ENCODE measurements at regions of chr19 and their contacts with region 1.

Region 1: GRCh38 chr19:12913851-12914690 is 5.0 kb downstream of the SYCE2 start:
- DNase-seq: peak; percentile 79
- H3K4me3 Mint-ChIP-seq: peak overlapping the region; percentile 45
- H3K27ac Mint-ChIP-seq: peak overlapping the region; percentile 88
- H3K4me1 Mint-ChIP-seq: peaks cover 31% of the 10 kb centered on the region
- H3K27me3 Mint-ChIP-seq: no peaks in the 10 kb centered on the region

Region 2: DNA sequence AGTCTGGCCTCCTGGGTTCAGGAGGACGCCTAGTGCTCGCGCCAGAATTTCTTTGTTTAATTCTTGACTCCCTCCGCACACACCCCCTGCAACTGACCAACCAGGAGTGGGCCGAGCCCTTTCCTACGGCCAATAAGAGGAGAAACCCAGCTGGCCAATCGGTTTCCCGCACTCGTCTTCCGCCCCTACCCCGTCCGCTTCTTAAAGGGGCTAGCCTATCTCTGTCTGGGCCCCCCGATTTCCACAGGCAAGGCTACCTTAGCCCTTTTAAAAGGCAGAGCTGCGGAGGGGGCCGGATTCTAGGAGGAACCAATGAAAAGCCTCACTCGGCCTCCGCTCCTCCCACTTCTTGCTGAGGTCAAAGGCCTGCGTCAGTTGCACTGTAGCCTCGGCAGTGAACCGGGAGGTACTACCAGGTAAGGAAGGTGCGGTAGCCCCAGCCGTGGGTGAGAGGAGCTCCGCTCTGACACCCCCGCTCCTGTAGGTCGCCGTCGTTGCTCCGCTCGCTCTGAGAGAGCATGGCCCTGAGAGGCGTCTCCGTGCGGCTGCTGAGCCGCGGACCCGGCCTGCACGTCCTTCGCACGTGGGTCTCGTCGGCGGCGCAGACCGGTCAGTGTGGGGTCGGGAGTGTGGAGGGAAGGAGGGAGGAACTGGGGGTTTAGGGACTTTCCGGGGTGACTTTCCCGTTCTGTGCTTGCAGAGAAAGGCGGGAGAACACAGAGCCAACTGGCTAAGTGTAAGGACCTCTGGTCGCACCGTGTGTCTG is 23.1 kb before region 1 on chr19 and contains the start of gene GCDH:
- CTCF ChIA-PET with region 1: no interaction called
- intact Hi-C with region 1: loop called (anchors 2 kb)
- DNase-seq: peak; percentile 98
- H3K4me3 Mint-ChIP-seq: peak within 1 kb of the TSS; percentile 93
- H3K27ac Mint-ChIP-seq: peak within 1 kb of the TSS; percentile 73
- H3K4me1 Mint-ChIP-seq: peaks cover 25% of the 10 kb centered on the region
- H3K27me3 Mint-ChIP-seq: no peaks in the 10 kb centered on the region
- total RNA-seq, gene GCDH: 36.3 to 38.3 TPM

Region 3: GRCh38 chr19:12939026-12939601 is 25.0 kb after region 1 on chr19:
- CTCF ChIA-PET with region 1: no interaction called
- intact Hi-C with region 1: no loop called
- DNase-seq: peak; percentile 67
- H3K4me3 Mint-ChIP-seq: peak overlapping the region; percentile 92
- H3K27ac Mint-ChIP-seq: peak overlapping the region; percentile 94
- H3K4me1 Mint-ChIP-seq: peaks cover 53% of the 10 kb centered on the region
- H3K27me3 Mint-ChIP-seq: no peaks in the 10 kb centered on the region

Measured in activated naive CD4-positive, alpha-beta T cell treated with anti-CD3 and anti-CD28 coated beads for 36 hours (primary cell).